ENCODE measurements at regions of chr6 and their contacts with region 1.

Region 1: DNA sequence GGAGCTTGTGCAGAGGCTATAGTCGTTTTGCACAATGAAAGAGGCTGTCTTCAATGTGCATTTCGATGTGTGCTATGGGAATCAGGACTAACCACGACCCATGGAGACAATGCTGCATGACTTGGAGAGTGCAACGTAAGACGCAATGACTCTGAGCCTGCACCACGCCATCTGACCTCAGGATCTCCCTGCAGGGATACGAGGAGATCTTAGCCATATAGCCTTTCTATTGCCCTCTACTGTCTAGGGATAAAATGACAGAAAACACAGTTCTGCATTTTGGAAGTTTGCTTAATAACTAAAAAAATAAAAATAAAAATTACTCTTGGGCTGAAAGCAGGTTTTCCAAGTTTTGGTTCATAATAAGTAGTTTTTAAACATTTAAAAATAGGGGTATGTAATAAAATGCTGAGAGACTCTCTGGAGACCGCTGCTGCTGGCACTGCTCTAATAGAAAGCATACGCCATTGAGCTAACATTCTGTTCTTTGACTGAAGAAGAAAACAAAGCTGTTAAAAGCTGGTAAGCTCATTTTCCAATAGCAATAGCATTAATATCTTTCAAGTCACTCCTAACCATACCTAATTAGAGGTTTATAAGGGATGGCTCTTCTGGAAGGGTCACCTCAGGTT is 87.2 kb downstream of the PDE7B start:
- DNase-seq: peak; percentile 26 to 68
- ATAC-seq: peak; percentile 89 to 96 (median 92)
- H3K4me3 ChIP-seq: peak overlapping the region; percentile 55
- H3K27ac ChIP-seq: peak overlapping the region; percentile 39
- H3K4me1 ChIP-seq: peaks cover 18% of the 10 kb centered on the region
- H3K27me3 ChIP-seq: no peaks in the 10 kb centered on the region
- CTCF ChIP-seq: peak; percentile 61

Region 2: DNA sequence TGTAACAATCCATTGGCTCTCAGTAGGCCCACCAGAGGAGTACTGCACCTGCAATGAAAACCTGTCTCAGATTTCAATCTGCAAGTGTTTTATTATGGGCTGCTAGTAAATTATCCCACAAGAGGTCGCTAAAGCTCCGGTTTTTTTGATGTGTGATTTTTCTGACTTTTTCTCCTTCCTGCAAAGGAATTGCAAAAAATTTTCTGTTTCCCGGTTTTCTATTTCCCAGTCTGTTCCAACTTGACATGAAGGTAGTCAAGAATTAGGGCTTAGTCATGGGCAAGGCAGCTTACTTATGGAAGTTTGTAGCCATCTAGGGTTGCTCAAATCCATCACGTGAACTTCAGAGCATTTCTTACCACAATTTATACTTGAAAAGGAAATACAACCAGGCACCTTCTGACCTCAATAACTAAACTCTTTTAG is 402.7 kb before region 1 on chr6:
- intact Hi-C with region 1: loop called (anchors 5 to 10 kb)
- DNase-seq: no peak
- ATAC-seq: peak in 2 of 4 donors; percentile 37 to 40
- H3K4me3 ChIP-seq: no peak overlapping the region
- H3K27ac ChIP-seq: no peak overlapping the region
- H3K4me1 ChIP-seq: no peaks in the 10 kb centered on the region
- H3K27me3 ChIP-seq: no peaks in the 10 kb centered on the region
- CTCF ChIP-seq: peak; percentile 68

Measured in psoas muscle (tissue), 8 donors.